Common myeloid progenitor, CD34-positive (primary cell): ENCODE measurements at regions of chr15 and their contacts with region 1.

Region 1: GRCh38 chr15:99210334-99210733 is 39.0 kb downstream of the TTC23 start:
- DNase-seq: no peak
- H3K4me3 ChIP-seq: no peak overlapping the region
- H3K27ac ChIP-seq: no peak overlapping the region
- H3K4me1 ChIP-seq: no peaks in the 10 kb centered on the region
- H3K27me3 ChIP-seq: no peaks in the 10 kb centered on the region

Region 2: DNA sequence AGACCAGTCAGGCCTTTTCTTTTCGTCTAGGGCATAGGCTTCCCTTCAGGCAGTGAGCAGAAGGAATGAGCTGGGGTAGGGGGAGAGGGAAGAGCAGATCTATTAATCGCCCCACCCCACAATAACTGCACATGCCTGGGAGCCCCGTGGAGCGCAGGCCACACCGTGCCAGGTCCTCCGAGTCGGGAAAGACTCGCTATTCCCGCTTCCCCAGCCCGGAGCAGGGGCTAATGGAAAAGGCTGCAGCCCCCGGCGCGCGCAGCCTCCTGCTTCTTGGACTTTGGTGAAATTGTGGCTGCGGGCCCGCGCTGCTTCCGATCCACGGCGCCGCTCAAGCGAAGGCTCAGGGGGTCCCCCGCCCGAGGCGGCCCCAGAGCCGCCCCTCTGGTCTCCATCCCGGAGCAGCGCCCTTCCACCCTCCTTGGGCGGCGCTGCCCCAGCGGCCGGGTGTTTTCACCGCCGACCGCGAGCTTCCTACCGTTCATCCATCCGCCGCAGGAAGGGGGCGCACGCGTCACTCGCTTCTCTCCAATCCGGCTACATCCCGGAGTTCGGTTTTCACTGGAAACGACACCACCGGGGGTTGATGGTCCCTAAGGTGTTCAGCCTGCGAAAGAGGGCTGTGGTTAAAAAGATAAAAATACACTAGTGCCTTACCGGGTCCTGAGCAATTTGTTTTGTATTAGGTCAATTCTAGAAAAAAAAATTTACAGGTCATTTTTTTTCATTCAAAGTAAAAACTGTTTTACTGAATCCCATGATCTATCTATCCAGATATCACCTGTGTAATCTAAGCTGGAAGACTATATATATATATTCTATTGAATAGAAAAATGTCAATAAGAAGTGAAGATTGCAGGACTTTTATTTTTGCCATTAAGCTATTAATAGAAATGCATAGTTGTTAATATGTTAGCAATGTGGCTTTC is 109.8 kb before region 1 on chr15:
- CTCF ChIA-PET with region 1: interaction called, 12 read pairs
- POLR2A ChIA-PET with region 1: no interaction called
- DNase-seq: peak; percentile 53 to 72 (median 70)
- H3K4me3 ChIP-seq: peak overlapping the region in 5 of 7 experiments; percentile 36 to 57 (median 40)
- H3K27ac ChIP-seq: no peak overlapping the region
- H3K4me1 ChIP-seq: peaks cover 0 to 18% (median 16%) of the 10 kb centered on the region in 4 experiments
- H3K27me3 ChIP-seq: peaks cover 0 to 56% (median 14%) of the 10 kb centered on the region in 5 experiments

Region 3: GRCh38 chr15:99296386-99296785 is 86.1 kb after region 1 on chr15:
- CTCF ChIA-PET with region 1: no interaction called
- POLR2A ChIA-PET with region 1: no interaction called
- DNase-seq: no peak
- H3K4me3 ChIP-seq: no peak overlapping the region
- H3K27ac ChIP-seq: no peak overlapping the region
- H3K4me1 ChIP-seq: no peaks in the 10 kb centered on the region
- H3K27me3 ChIP-seq: no peaks in the 10 kb centered on the region